ENCODE measurements at regions of chr10 and their contacts with region 1.

Region 1: GRCh38 chr10:21078410-21079329 is 181.6 kb upstream of the NEBL start:
- DNase-seq: peak; percentile 67
- H3K4me3 ChIP-seq: no peak overlapping the region
- H3K27ac ChIP-seq: no peak overlapping the region
- H3K4me1 ChIP-seq: no peaks in the 10 kb centered on the region
- H3K27me3 ChIP-seq: no peaks in the 10 kb centered on the region
- CTCF ChIP-seq: peak; percentile 58 to 67 (median 67)
- EP300 ChIP-seq: no peak
- POLR2A ChIP-seq: no peak

Region 2: GRCh38 chr10:20977300-20977699 is 101.4 kb before region 1 on chr10:
- in situ Hi-C with region 1: no loop called
- intact Hi-C with region 1: no loop called
- DNase-seq: no peak
- H3K4me3 ChIP-seq: no peak overlapping the region
- H3K27ac ChIP-seq: no peak overlapping the region
- H3K4me1 ChIP-seq: no peaks in the 10 kb centered on the region
- H3K27me3 ChIP-seq: no peaks in the 10 kb centered on the region
- CTCF ChIP-seq: no peak
- EP300 ChIP-seq: no peak
- POLR2A ChIP-seq: no peak

Region 3: GRCh38 chr10:21030091-21030490 is 48.6 kb before region 1 on chr10:
- in situ Hi-C with region 1: no loop called
- intact Hi-C with region 1: no loop called
- DNase-seq: no peak
- H3K4me3 ChIP-seq: no peak overlapping the region
- H3K27ac ChIP-seq: no peak overlapping the region
- H3K4me1 ChIP-seq: no peaks in the 10 kb centered on the region
- H3K27me3 ChIP-seq: no peaks in the 10 kb centered on the region
- CTCF ChIP-seq: no peak
- EP300 ChIP-seq: no peak
- POLR2A ChIP-seq: no peak

Region 4: DNA sequence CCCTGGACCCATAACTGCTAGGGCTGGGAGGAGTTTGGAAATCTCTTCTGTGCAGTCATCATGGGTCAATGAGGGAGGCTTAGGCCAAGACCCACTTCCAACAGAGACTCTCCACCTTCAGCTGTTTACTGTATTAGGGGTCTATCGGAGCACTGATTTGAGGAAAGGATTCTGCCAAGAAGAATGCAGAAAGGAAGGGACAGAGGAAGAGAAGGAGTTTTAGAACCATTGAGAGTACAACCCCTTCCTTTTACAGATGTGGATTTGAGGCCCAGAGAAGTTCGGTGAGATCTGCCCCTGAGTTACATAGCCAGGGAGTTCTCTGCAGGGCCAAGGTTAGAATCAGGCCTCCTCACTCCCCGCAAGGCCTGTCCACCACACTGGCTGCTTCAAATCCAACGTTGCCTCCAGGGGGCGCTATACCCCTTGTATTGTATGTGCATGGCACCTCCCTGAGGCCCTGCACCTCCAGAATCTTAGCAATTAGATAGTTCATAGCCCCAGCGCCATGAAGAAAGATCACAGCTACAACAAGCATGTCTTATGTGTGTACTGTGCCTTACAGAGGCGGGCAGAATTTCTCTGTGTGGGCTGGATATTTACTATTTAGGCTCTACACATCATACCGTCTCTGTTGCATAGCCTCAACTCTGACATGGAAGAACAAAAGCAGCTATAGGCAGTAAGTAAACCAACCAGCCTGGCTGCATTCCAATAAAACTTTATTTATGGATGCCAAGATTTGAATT is 200.0 kb after region 1 on chr10:
- in situ Hi-C with region 1: loop called in 2 of 4 experiments (anchors 5 to 10 kb)
- intact Hi-C with region 1: no loop called
- DNase-seq: peak; percentile 88
- H3K4me3 ChIP-seq: no peak overlapping the region
- H3K27ac ChIP-seq: no peak overlapping the region
- H3K4me1 ChIP-seq: no peaks in the 10 kb centered on the region
- H3K27me3 ChIP-seq: no peaks in the 10 kb centered on the region
- CTCF ChIP-seq: peak; percentile 57 to 73 (median 65)
- EP300 ChIP-seq: no peak
- POLR2A ChIP-seq: no peak